Sigmoid colon (tissue), 7 donors: ENCODE measurements at regions of chr17 and their contacts with region 1.

Region 1: DNA sequence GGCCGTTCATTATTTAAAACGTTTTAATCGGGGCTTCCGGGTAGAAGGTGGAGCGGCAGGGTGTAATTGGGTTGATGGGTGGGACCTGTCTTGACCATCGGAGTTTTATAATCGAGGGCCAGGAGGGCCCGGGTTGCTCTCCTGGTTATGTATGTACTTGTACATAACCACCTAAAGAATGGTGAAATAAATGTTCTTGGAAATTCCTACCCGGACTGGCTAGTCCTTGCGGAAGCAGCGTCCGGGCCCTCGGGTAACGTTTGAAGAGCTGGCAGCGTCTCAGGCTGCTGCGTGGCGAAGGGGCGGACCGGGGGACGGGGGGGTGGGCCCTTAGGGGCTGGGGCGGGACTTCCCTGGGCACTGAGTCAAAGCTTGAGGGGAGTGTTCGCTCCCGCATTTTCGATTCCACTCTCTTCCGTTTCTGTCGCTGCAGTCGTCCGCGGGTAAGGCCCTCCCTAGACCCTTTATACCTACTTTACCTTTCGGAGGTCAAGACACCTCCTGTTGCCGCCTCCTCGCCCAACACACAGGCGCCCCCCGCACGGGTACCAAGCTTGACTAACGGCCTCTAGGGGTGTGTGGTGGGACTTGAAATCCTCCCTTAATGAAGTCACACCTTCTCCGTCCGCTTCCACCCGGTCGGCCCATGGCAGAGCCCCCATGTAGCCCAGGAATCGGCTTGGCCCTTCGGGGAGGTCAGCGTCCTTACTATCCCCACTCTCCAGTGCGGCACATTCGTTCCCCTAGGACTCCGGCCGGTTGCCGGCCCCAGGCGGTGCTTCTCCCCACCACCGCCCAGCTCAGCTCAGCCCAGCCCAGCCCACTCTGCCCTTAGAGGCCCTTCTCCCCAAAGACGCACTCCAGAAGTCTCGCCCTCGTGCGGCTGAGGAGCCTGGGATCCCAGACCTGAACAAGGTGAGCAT is at the start of gene TMEM106A:
- DNase-seq: peak; percentile 93
- H3K4me3 ChIP-seq: peak within 1 kb of the TSS; percentile 51 to 71 (median 68)
- H3K27ac ChIP-seq: peak within 1 kb of the TSS; percentile 80 to 87 (median 84)
- H3K4me1 ChIP-seq: peaks cover 0 to 23% (median 20%) of the 10 kb centered on the region in 4 donors
- H3K27me3 ChIP-seq: no peaks in the 10 kb centered on the region
- CTCF ChIP-seq: peak; percentile 12 to 51 (median 40)
- EP300 ChIP-seq: no peak
- POLR2A ChIP-seq: peak in 1 of 2 donors; percentile 8
- total RNA-seq, gene TMEM106A: 3.0 to 7.2 (median 4.7) TPM

Region 2: GRCh38 chr17:42642336-42642735 is 569.4 kb before region 1 on chr17:
- intact Hi-C with region 1: no loop called
- DNase-seq: no peak
- H3K4me3 ChIP-seq: no peak overlapping the region
- H3K27ac ChIP-seq: no peak overlapping the region
- H3K4me1 ChIP-seq: no peaks in the 10 kb centered on the region
- H3K27me3 ChIP-seq: no peaks in the 10 kb centered on the region
- CTCF ChIP-seq: no peak
- EP300 ChIP-seq: no peak
- POLR2A ChIP-seq: no peak

Region 3: GRCh38 chr17:43316522-43317142 is 104.9 kb after region 1 on chr17:
- intact Hi-C with region 1: loop called (anchors 2 kb)
- DNase-seq: no peak
- H3K4me3 ChIP-seq: no peak overlapping the region
- H3K27ac ChIP-seq: no peak overlapping the region
- H3K4me1 ChIP-seq: no peaks in the 10 kb centered on the region
- H3K27me3 ChIP-seq: no peaks in the 10 kb centered on the region
- CTCF ChIP-seq: no peak
- EP300 ChIP-seq: no peak
- POLR2A ChIP-seq: no peak